Left colon (tissue), 2 donors: ENCODE measurements at regions of chr7 and their contacts with region 1.

Region 1: DNA sequence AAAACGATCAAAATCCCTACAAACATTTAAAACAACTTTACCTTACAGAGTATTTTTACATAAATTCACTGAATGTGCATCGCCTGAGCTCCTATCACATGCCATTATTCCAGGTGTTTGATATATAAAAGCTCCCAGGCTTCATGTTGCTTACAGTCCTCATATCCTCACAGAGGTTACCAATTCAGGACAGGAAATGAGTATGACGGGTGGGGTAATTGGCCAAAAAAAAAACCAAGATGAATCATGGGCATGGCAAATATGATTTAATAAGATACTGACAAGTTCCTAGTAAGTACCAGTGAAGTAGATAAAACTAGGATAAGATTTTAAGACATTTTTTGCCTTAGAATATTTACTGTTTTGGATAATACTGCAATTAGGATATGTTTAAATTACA is 135.8 kb downstream of the KMT2E start:
- DNase-seq: no peak
- ATAC-seq: no peak

Region 2: GRCh38 chr7:105429746-105430612 is 280.2 kb after region 1 on chr7:
- intact Hi-C with region 1: loop called in 1 of 2 experiments (anchors 10 kb)
- DNase-seq: peak; percentile 32 to 76
- ATAC-seq: peak; percentile 86